Activated CD4-positive, alpha-beta T cell treated with anti-CD3 and anti-CD28 coated beads for 36 hours (primary cell): ENCODE measurements at regions of chr6 and their contacts with region 1.

Region 1: GRCh38 chr6:157981395-157982296 is at the start of gene SYNJ2:
- DNase-seq: peak; percentile 90
- ATAC-seq: peak; percentile 84
- H3K4me3 Mint-ChIP-seq: peak within 1 kb of the TSS; percentile 91
- H3K27ac Mint-ChIP-seq: peak within 1 kb of the TSS; percentile 93
- H3K4me1 Mint-ChIP-seq: peaks cover 42% of the 10 kb centered on the region
- H3K27me3 Mint-ChIP-seq: peaks cover 1% of the 10 kb centered on the region
- total RNA-seq, gene SYNJ2: 28.6 to 30.1 TPM

Region 2: DNA sequence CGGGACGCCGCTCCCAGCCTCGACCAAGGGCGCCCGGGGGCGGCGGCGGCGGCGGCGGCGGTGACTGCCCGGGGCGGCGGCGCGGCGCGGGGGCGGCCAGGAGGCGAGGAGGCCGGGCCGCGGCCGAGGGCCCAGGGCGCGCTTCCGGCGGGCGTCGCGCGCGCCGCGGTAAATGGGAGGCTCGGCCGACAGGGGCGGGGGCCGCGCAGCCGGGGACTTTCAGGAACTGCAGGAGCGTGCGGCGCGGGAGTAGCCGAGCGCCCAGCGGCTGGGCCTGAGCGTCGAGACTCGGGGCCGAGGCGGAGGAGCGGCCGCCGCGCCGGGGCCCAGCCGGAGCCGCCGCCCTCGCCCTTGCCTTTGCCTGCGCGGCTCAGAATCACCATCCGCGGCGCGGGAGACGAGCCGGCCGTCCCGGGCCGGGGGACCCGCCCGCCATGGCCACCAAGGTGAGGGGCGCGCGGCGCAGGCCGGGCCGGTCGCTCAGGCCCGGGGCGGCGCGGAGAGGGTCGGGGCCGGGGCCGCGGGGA is 158.6 kb before region 1 on chr6 and contains the start of gene SNX9:
- CTCF ChIA-PET with region 1: no interaction called
- POLR2A ChIA-PET with region 1: no interaction called
- intact Hi-C with region 1: loop called in 1 of 2 experiments (anchors 2 kb)
- DNase-seq: peak; percentile 84
- ATAC-seq: peak; percentile 59
- H3K4me3 Mint-ChIP-seq: peak within 1 kb of the TSS; percentile 92
- H3K27ac Mint-ChIP-seq: peak within 1 kb of the TSS; percentile 99
- H3K4me1 Mint-ChIP-seq: peaks cover 48% of the 10 kb centered on the region
- H3K27me3 Mint-ChIP-seq: peaks cover 11% of the 10 kb centered on the region
- total RNA-seq, gene SNX9: 39.4 to 43.3 TPM

Region 3: DNA sequence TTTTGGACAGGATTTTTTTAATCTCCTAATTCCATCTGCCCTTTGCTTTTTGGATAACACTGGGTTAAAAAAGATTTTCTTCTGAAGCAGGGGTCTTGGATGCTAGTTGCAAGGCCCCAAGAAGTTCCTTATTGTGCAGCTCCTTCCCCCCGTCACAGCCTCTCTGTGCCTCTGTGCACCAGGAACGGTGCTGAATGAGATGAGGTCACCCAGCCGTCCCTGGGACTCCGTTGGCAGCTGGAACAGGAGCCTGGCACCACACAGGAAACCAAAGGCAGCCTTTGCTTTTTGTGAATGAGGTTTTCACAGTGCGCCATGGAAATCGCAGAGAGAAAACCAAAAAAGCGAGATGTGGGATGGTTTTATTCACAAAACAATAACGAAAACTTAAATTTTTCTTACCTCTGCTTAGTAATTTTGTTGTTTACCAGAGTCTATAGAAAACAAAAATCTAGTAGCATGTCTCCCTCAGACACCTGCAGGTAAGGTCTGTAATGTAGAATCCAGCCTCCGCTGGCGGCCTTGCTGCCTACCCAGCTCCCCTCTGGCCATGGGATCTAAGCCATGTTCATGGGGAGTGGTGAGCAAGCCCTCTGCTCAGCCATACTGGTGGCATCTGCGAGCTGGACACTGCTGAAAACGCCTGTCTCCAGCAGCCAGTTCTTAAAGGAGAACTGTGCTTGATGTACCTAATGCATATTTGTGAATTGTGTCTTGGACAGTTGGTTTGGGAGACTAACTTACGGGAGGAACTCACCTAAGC is 40.4 kb before region 1 on chr6:
- CTCF ChIA-PET with region 1: interaction called, 3 read pairs
- POLR2A ChIA-PET with region 1: no interaction called
- intact Hi-C with region 1: loop called in 1 of 2 experiments (anchors 2 kb)
- DNase-seq: no peak
- ATAC-seq: no peak
- H3K4me3 Mint-ChIP-seq: no peak overlapping the region
- H3K27ac Mint-ChIP-seq: peak overlapping the region; percentile 47
- H3K4me1 Mint-ChIP-seq: peaks cover 37% of the 10 kb centered on the region
- H3K27me3 Mint-ChIP-seq: no peaks in the 10 kb centered on the region

Region 4: DNA sequence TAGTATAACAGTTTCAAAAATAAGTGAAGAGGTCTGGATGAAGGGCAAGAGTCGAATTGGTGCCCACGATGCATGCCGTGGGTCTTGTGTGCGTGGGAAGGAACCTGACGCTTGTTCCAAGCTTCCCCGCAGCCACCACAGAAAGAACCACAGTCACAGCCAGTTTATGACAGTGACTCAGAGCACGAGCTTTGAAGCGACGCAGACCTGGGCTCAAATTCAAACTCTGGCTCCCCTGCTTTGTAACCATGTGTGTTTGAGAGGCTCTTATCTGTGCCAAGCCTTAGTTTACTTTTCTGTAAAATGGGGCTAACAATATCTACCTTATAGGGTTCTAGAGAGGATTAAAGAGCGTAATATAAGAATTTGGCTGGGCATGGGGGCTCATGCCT is 65.5 kb after region 1 on chr6:
- CTCF ChIA-PET with region 1: no interaction called
- POLR2A ChIA-PET with region 1: no interaction called
- intact Hi-C with region 1: loop called in 1 of 2 experiments (anchors 5 kb)
- DNase-seq: peak; percentile 91
- ATAC-seq: peak; percentile 93
- H3K4me3 Mint-ChIP-seq: peak overlapping the region; percentile 25
- H3K27ac Mint-ChIP-seq: peak overlapping the region; percentile 85
- H3K4me1 Mint-ChIP-seq: peaks cover 33% of the 10 kb centered on the region
- H3K27me3 Mint-ChIP-seq: no peaks in the 10 kb centered on the region

Region 5: GRCh38 chr6:158072083-158072721 is 90.6 kb after region 1 on chr6:
- CTCF ChIA-PET with region 1: interaction called, 10 read pairs
- POLR2A ChIA-PET with region 1: no interaction called
- intact Hi-C with region 1: loop called (anchors 1 to 5 kb)
- DNase-seq: peak; percentile 85
- ATAC-seq: peak; percentile 76
- H3K4me3 Mint-ChIP-seq: no peak overlapping the region
- H3K27ac Mint-ChIP-seq: no peak overlapping the region
- H3K4me1 Mint-ChIP-seq: peaks cover 27% of the 10 kb centered on the region
- H3K27me3 Mint-ChIP-seq: no peaks in the 10 kb centered on the region

Region 6: GRCh38 chr6:158122048-158122447 is 140.4 kb after region 1 on chr6:
- CTCF ChIA-PET with region 1: no interaction called
- POLR2A ChIA-PET with region 1: no interaction called
- intact Hi-C with region 1: no loop called
- DNase-seq: no peak
- ATAC-seq: no peak
- H3K4me3 Mint-ChIP-seq: no peak overlapping the region
- H3K27ac Mint-ChIP-seq: no peak overlapping the region
- H3K4me1 Mint-ChIP-seq: no peaks in the 10 kb centered on the region
- H3K27me3 Mint-ChIP-seq: no peaks in the 10 kb centered on the region